Posterior cingulate gyrus (tissue), 11 donors: ENCODE measurements at regions of chr12 and their contacts with region 1.

Region 1: DNA sequence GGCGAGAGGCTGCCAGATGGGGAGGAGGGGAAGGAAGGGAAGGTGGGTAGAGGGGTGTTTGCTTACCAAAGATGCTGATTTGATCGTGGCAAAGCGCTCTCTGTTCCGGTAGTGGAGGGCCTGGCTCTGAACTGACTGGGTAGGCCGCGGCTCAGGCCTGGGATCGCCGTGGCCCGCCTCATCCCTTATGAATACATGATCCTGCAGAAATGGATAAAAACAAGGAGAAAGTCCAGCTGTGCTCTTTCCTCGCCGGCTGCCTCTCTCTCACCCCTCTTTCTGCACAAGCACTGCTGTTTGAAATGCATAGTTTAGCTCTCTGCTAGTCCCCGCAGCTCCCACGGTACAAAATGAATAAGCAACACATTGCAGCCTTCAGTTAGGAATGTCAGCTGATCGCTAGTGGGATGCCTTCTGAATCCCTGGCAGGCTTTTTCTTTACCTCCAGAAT is 53.8 kb downstream of the PEBP1 start:
- DNase-seq: peak; percentile 40 to 93 (median 58)

Region 2: GRCh38 chr12:116369921-116370404 is 1819.8 kb before region 1 on chr12:
- intact Hi-C with region 1: no loop called
- DNase-seq: no peak

Region 3: GRCh38 chr12:118052324-118053070 is 137.3 kb before region 1 on chr12:
- intact Hi-C with region 1: no loop called
- DNase-seq: peak in 4 of 10 donors; percentile 33 to 83 (median 38)

Region 4: GRCh38 chr12:118135788-118136558 is 53.8 kb before region 1 on chr12 and contains the start of gene PEBP1:
- intact Hi-C with region 1: loop called (anchors 5 kb)
- DNase-seq: peak; percentile 98 to 100 (median 99)

Region 5: GRCh38 chr12:118288174-118288573 is 98.4 kb after region 1 on chr12:
- intact Hi-C with region 1: loop called (anchors 10 kb)
- DNase-seq: no peak